Mammary epithelial cell (primary cell): ENCODE measurements at regions of chr9 and their contacts with region 1.

Region 1: GRCh38 chr9:91001146-91001611 is 199.6 kb downstream of the SYK start:
- DNase-seq: peak; percentile 100
- H3K4me3 ChIP-seq: no peak overlapping the region
- H3K27ac ChIP-seq: peak overlapping the region; percentile 96
- H3K4me1 ChIP-seq: peaks cover 36% of the 10 kb centered on the region
- H3K27me3 ChIP-seq: no peaks in the 10 kb centered on the region
- CTCF ChIP-seq: no peak

Region 2: DNA sequence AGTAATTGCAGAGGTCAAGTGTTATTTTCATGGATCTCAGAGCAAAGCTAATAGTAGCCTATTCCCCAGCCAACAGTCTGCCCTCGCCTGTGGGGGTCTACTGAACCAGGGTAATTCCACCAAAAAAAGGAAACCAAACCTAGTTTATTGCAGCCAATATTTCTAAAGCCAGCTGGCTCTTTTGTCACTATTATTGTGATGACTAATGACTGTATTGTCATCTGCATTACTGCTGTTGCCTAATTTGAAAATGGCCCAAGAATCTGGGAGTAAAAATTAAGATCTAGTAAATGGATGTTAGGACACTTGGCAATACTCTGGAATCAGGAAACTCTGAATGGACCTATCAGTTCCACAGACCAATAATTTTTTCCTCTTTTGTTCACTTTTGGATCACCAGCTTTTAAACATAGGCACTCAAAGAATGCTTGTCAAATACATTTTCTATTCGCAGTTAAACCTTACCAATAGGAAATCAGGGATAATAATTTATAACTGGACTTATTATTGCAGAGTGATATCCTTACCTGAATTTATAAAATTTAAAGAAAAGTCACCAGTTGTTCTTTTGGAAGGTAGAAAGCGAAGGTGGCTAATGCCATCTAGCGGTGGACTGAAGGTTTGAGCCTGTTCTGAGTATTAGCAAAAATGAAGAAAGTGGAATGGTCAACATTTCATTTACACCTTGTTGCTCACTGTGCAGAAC is 130.4 kb before region 1 on chr9:
- CTCF ChIA-PET with region 1: no interaction called
- dilution Hi-C with region 1: no loop called
- in situ Hi-C with region 1: no loop called
- intact Hi-C with region 1: no loop called
- DNase-seq: peak; percentile 26
- H3K4me3 ChIP-seq: no peak overlapping the region
- H3K27ac ChIP-seq: no peak overlapping the region
- H3K4me1 ChIP-seq: no peaks in the 10 kb centered on the region
- H3K27me3 ChIP-seq: no peaks in the 10 kb centered on the region
- CTCF ChIP-seq: peak; percentile 88 to 92

Region 3: GRCh38 chr9:90942555-90942954 is 58.6 kb before region 1 on chr9:
- CTCF ChIA-PET with region 1: no interaction called
- dilution Hi-C with region 1: no loop called
- in situ Hi-C with region 1: no loop called
- intact Hi-C with region 1: loop called (anchors 2 kb)
- DNase-seq: peak; percentile 100
- H3K4me3 ChIP-seq: no peak overlapping the region
- H3K27ac ChIP-seq: peak overlapping the region; percentile 87
- H3K4me1 ChIP-seq: peaks cover 26% of the 10 kb centered on the region
- H3K27me3 ChIP-seq: no peaks in the 10 kb centered on the region
- CTCF ChIP-seq: no peak

Region 4: DNA sequence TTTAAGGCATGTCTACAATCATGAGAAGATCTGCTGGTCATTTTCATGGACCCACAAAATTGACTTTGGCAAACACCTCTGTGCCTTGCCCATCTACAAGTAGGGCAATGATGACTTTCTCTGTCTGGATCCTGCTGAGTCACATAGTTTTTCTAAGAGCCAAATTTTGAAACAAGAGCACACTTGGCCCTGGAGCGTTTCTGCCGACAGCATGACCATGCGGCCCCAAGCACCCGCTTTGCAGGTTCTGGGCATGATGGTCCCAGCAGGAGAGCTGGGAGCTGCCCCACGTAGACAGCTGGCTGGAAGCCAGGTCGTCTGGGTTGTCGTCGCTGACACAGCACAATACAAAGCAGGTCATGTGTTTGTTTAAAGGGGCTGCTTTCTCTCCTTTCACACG is 39.8 kb before region 1 on chr9:
- CTCF ChIA-PET with region 1: no interaction called
- dilution Hi-C with region 1: no loop called
- in situ Hi-C with region 1: no loop called
- intact Hi-C with region 1: no loop called
- DNase-seq: peak; percentile 80
- H3K4me3 ChIP-seq: no peak overlapping the region
- H3K27ac ChIP-seq: no peak overlapping the region
- H3K4me1 ChIP-seq: peaks cover 17% of the 10 kb centered on the region
- H3K27me3 ChIP-seq: no peaks in the 10 kb centered on the region
- CTCF ChIP-seq: no peak

Region 5: DNA sequence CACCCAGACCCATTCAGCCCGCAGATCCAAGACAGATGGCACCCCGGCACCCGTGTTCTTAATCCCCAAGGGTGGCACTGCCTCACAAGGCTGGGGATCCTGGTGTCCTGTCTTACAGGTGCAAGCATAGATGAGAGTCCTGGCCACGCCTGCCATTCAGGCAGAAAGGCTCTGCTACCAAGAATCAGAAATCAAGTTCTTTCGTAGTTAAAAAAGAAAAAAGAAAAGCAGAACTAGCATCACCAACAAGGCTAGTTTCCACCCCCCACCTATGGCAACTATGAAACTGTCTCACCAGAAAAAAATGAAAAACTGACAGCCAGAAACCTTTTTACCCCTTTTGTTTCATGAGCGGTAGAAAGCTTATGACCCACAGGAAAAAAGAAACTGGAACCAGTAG is 29.1 kb before region 1 on chr9:
- CTCF ChIA-PET with region 1: interaction called, 4 read pairs
- dilution Hi-C with region 1: no loop called
- in situ Hi-C with region 1: no loop called
- intact Hi-C with region 1: loop called (anchors 2 kb)
- DNase-seq: no peak
- H3K4me3 ChIP-seq: no peak overlapping the region
- H3K27ac ChIP-seq: no peak overlapping the region
- H3K4me1 ChIP-seq: peaks cover 44% of the 10 kb centered on the region
- H3K27me3 ChIP-seq: no peaks in the 10 kb centered on the region
- CTCF ChIP-seq: no peak

Region 6: DNA sequence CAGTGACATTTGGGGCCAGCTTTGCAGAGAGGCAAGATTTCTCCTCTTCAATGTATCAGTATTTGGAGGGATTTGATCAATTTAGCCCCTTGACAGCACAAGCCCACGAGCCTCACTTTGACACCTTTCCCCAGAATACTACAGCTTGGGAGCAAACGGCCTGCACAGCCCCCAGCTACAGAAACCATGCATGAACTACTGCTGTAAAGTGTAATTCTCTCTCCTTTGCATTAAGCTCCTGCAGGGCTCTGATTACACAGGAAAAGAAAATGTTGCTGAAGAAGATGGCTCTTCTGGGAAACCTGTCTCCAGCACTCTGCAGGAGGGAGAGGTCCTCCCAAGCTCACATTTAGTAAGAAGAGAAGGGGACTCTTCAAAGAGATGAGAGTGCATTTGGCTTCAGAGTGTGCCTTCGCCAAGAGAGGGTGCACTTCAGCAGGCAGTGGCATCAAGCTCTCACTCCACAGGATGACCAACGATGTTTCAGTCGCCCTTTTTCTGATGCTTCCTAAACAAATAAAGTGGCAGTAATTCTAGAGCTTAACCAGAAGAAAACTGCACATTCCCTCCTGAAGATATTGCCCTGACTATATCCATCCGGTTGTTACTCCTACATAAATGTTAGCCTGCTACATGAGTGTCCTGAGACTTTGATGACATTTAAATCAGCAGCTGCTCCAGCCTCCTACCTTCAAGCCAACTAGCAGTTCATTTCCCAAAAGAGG is 88.4 kb after region 1 on chr9:
- CTCF ChIA-PET with region 1: no interaction called
- dilution Hi-C with region 1: no loop called
- in situ Hi-C with region 1: no loop called
- intact Hi-C with region 1: no loop called
- DNase-seq: peak; percentile 29
- H3K4me3 ChIP-seq: no peak overlapping the region
- H3K27ac ChIP-seq: no peak overlapping the region
- H3K4me1 ChIP-seq: no peaks in the 10 kb centered on the region
- H3K27me3 ChIP-seq: no peaks in the 10 kb centered on the region
- CTCF ChIP-seq: peak; percentile 39 to 67

Region 7: GRCh38 chr9:91131433-91131839 is 130.3 kb after region 1 on chr9:
- CTCF ChIA-PET with region 1: no interaction called
- dilution Hi-C with region 1: no loop called
- in situ Hi-C with region 1: no loop called
- intact Hi-C with region 1: loop called (anchors 5 kb)
- DNase-seq: peak; percentile 97
- H3K4me3 ChIP-seq: no peak overlapping the region
- H3K27ac ChIP-seq: peak overlapping the region; percentile 91
- H3K4me1 ChIP-seq: peaks cover 19% of the 10 kb centered on the region
- H3K27me3 ChIP-seq: no peaks in the 10 kb centered on the region
- CTCF ChIP-seq: no peak

Region 8: DNA sequence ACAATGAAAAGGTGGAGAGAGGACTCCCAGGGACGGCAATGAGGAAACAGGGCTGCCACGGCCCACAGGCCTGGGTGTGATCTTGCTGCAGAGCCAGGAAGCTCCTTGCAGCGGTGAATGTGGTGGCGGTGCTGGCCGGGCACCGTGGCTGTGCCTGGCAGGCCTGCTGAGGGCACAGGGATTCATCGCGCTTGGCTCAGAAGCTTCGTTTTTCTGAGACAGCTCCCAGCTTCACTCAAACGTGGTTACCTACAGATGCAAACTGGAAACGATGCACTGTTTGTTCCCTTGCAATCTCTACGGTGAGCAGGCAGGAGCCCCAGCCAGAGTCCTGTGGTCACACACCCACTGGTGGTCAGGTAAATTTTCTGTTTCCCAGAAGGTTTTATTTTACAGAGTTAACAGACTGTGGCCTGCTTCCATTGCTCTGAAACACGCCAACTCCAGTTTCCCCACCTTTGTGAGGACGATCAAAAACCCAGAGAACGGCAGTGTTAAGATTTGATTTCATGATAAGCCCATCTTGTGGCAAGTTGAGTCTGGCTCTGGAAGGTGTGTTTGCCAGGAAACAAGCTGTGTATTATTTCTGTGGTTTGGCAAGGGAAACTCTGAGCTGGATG is 176.6 kb after region 1 on chr9:
- CTCF ChIA-PET with region 1: no interaction called
- dilution Hi-C with region 1: no loop called
- in situ Hi-C with region 1: no loop called
- intact Hi-C with region 1: loop called (anchors 5 kb)
- DNase-seq: peak; percentile 96
- H3K4me3 ChIP-seq: no peak overlapping the region
- H3K27ac ChIP-seq: peak overlapping the region; percentile 78
- H3K4me1 ChIP-seq: peaks cover 46% of the 10 kb centered on the region
- H3K27me3 ChIP-seq: no peaks in the 10 kb centered on the region
- CTCF ChIP-seq: no peak

Region 9: GRCh38 chr9:91253488-91253887 is 252.3 kb after region 1 on chr9:
- CTCF ChIA-PET with region 1: no interaction called
- dilution Hi-C with region 1: no loop called
- in situ Hi-C with region 1: no loop called
- intact Hi-C with region 1: no loop called
- DNase-seq: peak; percentile 9
- H3K4me3 ChIP-seq: no peak overlapping the region
- H3K27ac ChIP-seq: no peak overlapping the region
- H3K4me1 ChIP-seq: no peaks in the 10 kb centered on the region
- H3K27me3 ChIP-seq: no peaks in the 10 kb centered on the region
- CTCF ChIP-seq: peak in 1 of 2 donors; percentile 10